ENCODE measurements at regions of chr15 and their contacts with region 1.

Region 1: GRCh38 chr15:96524676-96525417 is 194.3 kb downstream of the NR2F2 start:
- DNase-seq: no peak
- H3K4me3 ChIP-seq: no peak overlapping the region
- H3K27ac ChIP-seq: no peak overlapping the region
- H3K4me1 ChIP-seq: no peaks in the 10 kb centered on the region
- H3K27me3 ChIP-seq: no peaks in the 10 kb centered on the region
- CTCF ChIP-seq: no peak
- EP300 ChIP-seq: no peak
- POLR2A ChIP-seq: no peak

Region 2: DNA sequence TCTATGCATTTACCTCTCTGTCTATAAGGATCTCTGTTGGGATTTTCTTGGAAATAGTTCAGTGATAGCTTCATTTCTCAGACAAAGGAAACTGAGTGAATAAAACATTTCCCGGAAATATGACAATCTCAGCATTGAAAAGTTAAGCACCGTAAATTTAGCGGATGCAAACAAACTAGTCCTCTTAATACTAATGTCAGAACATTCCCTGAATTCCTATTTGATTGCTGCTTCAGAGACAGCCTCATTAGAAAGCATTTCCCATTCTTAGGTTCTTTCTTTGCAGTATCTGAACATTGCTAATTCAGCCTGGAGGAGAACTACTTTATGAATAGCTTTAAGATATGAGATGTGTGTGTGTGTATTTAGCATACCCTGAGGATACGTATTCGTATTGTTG is 93.1 kb before region 1 on chr15:
- in situ Hi-C with region 1: no loop called
- intact Hi-C with region 1: loop called (anchors 5 kb)
- DNase-seq: no peak
- H3K4me3 ChIP-seq: no peak overlapping the region
- H3K27ac ChIP-seq: no peak overlapping the region
- H3K4me1 ChIP-seq: no peaks in the 10 kb centered on the region
- H3K27me3 ChIP-seq: peaks cover 9% of the 10 kb centered on the region
- CTCF ChIP-seq: no peak
- EP300 ChIP-seq: no peak
- POLR2A ChIP-seq: no peak

Measured in transverse colon (tissue), 4 donors.